ENCODE measurements at regions of chrX and their contacts with region 1.

Region 1: GRCh38 chrX:49884290-49884862 is 5.1 kb downstream of the USP27X start:
- DNase-seq: peak; percentile 47
- H3K4me3 ChIP-seq: no peak overlapping the region
- H3K27ac ChIP-seq: no peak overlapping the region
- H3K4me1 ChIP-seq: peaks cover 5% of the 10 kb centered on the region
- H3K27me3 ChIP-seq: no peaks in the 10 kb centered on the region
- CTCF ChIP-seq: peak; percentile 59 to 76
- POLR2A ChIP-seq: no peak

Region 2: GRCh38 chrX:50036426-50036825 is 152.1 kb after region 1 on chrX:
- CTCF ChIA-PET with region 1: no interaction called
- POLR2A ChIA-PET with region 1: no interaction called
- dilution Hi-C with region 1: no loop called
- intact Hi-C with region 1: no loop called
- DNase-seq: peak; percentile 32
- H3K4me3 ChIP-seq: peak overlapping the region in 1 of 3 experiments; percentile 40
- H3K27ac ChIP-seq: peak overlapping the region; percentile 29
- H3K4me1 ChIP-seq: peaks cover 14% of the 10 kb centered on the region
- H3K27me3 ChIP-seq: no peaks in the 10 kb centered on the region
- CTCF ChIP-seq: no peak
- POLR2A ChIP-seq: no peak

Region 3: DNA sequence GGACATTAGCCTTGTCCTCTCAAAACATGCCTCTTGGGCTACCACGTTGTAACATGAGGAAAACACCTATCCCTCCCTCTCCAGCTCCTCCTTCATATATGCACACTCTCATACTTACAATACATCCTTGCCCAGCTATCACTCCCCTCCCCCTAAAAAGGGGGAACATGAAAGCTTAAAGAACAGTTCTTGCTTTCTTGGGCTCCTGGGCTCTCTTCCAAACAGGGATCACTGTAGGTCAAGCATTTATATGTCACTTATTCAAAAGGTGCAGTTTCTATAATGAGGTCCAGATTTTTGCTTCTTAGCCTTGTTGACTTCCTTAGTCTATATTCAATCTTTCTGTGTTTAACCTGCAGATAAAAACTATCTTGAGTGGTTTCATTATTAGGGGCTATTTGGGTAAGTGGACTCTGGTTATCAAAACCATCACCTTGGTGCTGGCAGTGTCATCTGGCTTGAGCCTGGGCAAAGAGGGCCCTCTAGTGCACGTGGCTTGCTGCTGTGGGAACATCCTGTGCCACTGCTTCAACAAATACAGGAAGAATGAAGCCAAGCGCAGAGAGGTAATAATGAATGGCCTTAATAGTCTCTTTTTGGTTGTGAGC is 197.0 kb after region 1 on chrX:
- CTCF ChIA-PET with region 1: interaction called, 12 read pairs
- POLR2A ChIA-PET with region 1: no interaction called
- dilution Hi-C with region 1: no loop called
- intact Hi-C with region 1: loop called (anchors 1 kb)
- DNase-seq: peak; percentile 34
- H3K4me3 ChIP-seq: no peak overlapping the region
- H3K27ac ChIP-seq: no peak overlapping the region
- H3K4me1 ChIP-seq: no peaks in the 10 kb centered on the region
- H3K27me3 ChIP-seq: no peaks in the 10 kb centered on the region
- CTCF ChIP-seq: peak; percentile 15 to 53
- POLR2A ChIP-seq: no peak